Motor neuron (in vitro differentiated cells): ENCODE measurements at regions of chrX and their contacts with region 1.

Region 1: GRCh38 chrX:10119399-10119990 is 37.3 kb upstream of the CLCN4 start:
- ATAC-seq: peak in 7 of 8 experiments; percentile 46 to 67 (median 58)
- H3K4me3 ChIP-seq: no peak overlapping the region
- H3K27ac ChIP-seq: no peak overlapping the region
- H3K4me1 ChIP-seq: no peaks in the 10 kb centered on the region

Region 2: GRCh38 chrX:8815464-8816065 is 1303.9 kb before region 1 on chrX:
- in situ Hi-C with region 1: loop called in 1 of 9 experiments (anchors 25 kb)
- ATAC-seq: peak in 2 of 8 experiments; percentile 29 to 68
- H3K4me3 ChIP-seq: no peak overlapping the region
- H3K27ac ChIP-seq: no peak overlapping the region
- H3K4me1 ChIP-seq: no peaks in the 10 kb centered on the region

Region 3: GRCh38 chrX:9885150-9885549 is 234.3 kb before region 1 on chrX:
- in situ Hi-C with region 1: loop called in 1 of 9 experiments (anchors 25 kb)
- ATAC-seq: peak; percentile 36 to 85 (median 76)
- H3K4me3 ChIP-seq: no peak overlapping the region
- H3K27ac ChIP-seq: no peak overlapping the region
- H3K4me1 ChIP-seq: peaks cover 0 to 8% of the 10 kb centered on the region in 2 donors

Region 4: GRCh38 chrX:9988762-9989161 is 130.7 kb before region 1 on chrX:
- in situ Hi-C with region 1: loop called in 3 of 9 experiments (anchors 10 to 25 kb)
- ATAC-seq: no peak
- H3K4me3 ChIP-seq: no peak overlapping the region
- H3K27ac ChIP-seq: no peak overlapping the region
- H3K4me1 ChIP-seq: peaks cover 0 to under 1% of the 10 kb centered on the region in 2 donors

Region 5: DNA sequence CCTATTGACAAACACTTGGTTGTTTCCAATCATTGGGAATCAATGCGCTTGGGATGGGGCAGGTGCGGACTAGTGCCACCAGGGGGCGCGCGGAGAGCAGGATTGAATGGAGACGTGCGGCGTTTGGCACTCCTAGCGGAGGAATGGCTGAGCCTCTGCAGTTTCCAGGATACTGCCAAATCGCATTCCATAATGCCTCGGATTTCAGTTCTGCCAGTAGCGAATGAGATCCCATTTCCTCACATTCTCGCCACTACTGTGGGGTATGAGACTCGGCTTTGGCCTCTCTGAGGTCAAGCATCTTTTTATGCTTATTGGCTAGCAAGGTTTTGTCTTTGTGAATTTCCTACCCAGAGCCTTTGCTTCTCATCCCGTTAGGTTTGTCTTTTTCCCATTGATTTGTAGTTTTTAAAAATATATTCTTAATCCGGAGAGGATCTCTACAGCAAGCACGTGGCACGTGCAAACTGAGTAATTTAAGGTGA is 123.6 kb before region 1 on chrX:
- in situ Hi-C with region 1: loop called in 1 of 9 experiments (anchors 25 kb)
- ATAC-seq: peak in 7 of 8 experiments; percentile 35 to 95 (median 68)
- H3K4me3 ChIP-seq: no peak overlapping the region
- H3K27ac ChIP-seq: no peak overlapping the region
- H3K4me1 ChIP-seq: no peaks in the 10 kb centered on the region

Region 6: GRCh38 chrX:10240918-10241317 is 121.4 kb after region 1 on chrX:
- in situ Hi-C with region 1: no loop called
- ATAC-seq: no peak
- H3K4me3 ChIP-seq: no peak overlapping the region
- H3K27ac ChIP-seq: no peak overlapping the region
- H3K4me1 ChIP-seq: no peaks in the 10 kb centered on the region

Region 7: GRCh38 chrX:10254741-10255140 is 135.2 kb after region 1 on chrX:
- in situ Hi-C with region 1: no loop called
- ATAC-seq: peak in 2 of 8 experiments; percentile 26 to 72
- H3K4me3 ChIP-seq: no peak overlapping the region
- H3K27ac ChIP-seq: no peak overlapping the region
- H3K4me1 ChIP-seq: no peaks in the 10 kb centered on the region